ENCODE measurements at regions of chr4 and their contacts with region 1.

Region 1: DNA sequence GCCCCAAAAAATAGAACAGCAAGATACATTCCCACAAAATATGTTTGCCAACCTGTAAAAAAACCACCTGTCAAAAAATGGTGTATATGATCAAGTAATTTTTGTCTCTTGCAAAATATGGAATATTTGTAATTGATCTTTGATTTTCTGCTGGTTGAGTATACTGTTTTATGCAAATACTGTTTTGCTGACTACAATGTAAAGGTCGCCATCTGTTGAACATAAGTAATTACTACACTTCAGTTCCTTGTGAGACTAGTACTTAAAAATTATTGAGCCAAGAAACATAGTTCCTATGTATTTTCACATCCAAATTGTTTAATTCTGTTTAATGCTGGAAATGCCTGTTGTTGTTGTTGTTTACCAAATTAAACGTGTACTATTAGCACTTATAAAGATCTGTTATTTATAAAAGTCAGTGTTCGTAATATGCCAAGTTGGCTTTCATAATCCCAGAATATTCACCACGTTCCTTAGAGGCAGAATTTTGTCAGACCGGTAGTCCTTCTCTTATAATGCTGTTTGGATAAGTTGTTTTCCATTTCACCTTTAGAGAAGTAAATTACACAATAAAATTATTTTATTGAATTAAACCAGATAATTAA is 144.2 kb downstream of the PDLIM5 start:
- DNase-seq: no peak
- H3K4me3 ChIP-seq: no peak overlapping the region
- H3K27me3 ChIP-seq: no peaks in the 10 kb centered on the region
- CTCF ChIP-seq: peak; percentile 53

Region 2: DNA sequence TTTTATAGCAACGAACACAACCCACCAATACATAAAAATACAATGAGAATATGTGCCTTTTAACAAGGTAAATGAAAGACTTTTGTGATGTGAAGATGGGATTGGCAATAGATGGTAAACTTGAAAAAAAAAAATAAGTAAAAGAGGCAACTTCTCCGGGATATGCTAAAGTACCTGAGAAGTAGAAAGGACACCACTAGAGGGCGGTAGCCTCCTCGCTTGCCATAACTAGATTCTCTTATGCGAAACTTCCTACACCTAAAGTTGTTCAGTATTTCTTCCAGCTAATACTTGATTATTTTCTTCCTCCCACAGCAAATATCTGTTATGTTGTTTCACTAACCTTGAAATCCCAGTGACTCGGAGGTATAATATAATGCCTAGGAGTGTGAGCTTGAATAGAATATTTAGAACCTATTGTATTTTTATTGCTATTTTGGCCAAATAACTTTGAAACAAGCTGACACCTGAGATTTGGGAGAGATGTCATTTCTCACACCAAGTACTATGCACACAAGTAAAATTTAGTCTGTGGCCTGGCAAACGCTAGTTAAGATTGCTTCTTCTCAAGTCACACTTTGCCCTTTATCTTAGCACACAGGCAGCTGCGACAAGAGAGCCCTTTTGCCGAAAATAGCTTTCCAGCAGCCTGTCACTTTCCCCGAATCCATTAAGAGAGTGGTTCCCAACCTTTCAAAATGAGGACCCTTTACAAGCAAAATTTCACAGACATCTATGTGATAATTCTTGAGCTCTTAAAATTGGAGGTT is 189.1 kb before region 1 on chr4:
- CTCF ChIA-PET with region 1: interaction called, 13 read pairs
- POLR2A ChIA-PET with region 1: no interaction called
- DNase-seq: peak; percentile 26
- H3K4me3 ChIP-seq: no peak overlapping the region
- H3K27me3 ChIP-seq: no peaks in the 10 kb centered on the region
- CTCF ChIP-seq: peak; percentile 88

Region 3: GRCh38 chr4:94806376-94806775 is 210.4 kb after region 1 on chr4:
- CTCF ChIA-PET with region 1: no interaction called
- POLR2A ChIA-PET with region 1: no interaction called
- DNase-seq: no peak
- H3K4me3 ChIP-seq: no peak overlapping the region
- H3K27me3 ChIP-seq: peaks cover 3% of the 10 kb centered on the region; the same call in 1 of the 2 replicates
- CTCF ChIP-seq: no peak

Measured in BJ (cell line).